ENCODE measurements at regions of chr2 and their contacts with region 1.

Region 1: DNA sequence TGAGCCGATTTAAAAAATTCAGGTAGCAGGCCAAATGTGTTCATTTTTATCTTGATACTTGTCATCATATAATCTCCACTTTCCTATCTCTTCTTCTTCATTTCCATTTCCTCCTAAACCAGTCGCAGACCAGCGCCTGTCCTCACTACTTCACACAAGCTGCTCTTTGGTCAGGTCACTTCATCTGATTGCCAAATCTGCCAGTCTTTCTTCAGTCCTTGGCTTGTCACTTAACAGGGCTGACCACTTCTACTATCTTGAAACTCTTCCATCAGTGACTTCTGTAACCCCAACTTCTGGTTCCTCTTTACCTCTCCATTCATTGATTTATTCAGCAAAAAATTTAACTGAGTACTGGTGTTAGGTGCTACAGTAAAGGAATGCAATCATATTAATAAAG is 18.0 kb upstream of the SPRED2 start:
- DNase-seq: no peak
- H3K4me3 ChIP-seq: no peak overlapping the region
- H3K27ac ChIP-seq: no peak overlapping the region
- H3K4me1 ChIP-seq: peaks cover 52% of the 10 kb centered on the region
- H3K27me3 ChIP-seq: no peaks in the 10 kb centered on the region
- CTCF ChIP-seq: no peak

Region 2: DNA sequence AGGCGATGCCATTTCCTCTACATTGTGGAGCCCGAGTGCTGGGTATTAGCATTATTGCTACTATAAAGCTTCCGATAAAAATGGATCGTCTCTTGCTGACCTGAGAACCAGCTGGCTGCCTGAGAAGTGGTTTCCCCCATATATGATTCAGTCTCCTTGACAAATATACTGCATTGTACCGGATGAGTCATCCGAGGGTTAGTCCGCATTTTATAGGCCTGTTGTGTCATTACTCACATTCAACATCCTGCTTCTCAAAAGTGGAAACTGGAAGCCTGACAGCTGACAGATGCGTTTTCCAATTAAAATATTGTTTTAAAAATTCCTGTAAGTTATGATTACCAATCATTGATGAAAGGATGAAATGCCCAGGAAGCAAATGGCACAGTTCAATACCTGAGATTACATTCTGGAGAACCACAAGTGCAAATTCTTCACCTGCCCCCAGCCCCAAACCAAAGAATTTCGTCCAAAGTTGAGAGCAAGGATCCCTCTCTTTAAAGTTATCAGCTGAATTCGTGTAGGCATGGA is 83.7 kb before region 1 on chr2:
- CTCF ChIA-PET with region 1: no interaction called
- POLR2A ChIA-PET with region 1: no interaction called
- intact Hi-C with region 1: loop called (anchors 1 kb)
- DNase-seq: peak; percentile 57 to 96
- H3K4me3 ChIP-seq: peak overlapping the region; percentile 48; the same call in 1 of the 2 replicates
- H3K27ac ChIP-seq: peak overlapping the region; percentile 76
- H3K4me1 ChIP-seq: peaks cover 49% of the 10 kb centered on the region
- H3K27me3 ChIP-seq: no peaks in the 10 kb centered on the region
- CTCF ChIP-seq: no peak

Region 3: DNA sequence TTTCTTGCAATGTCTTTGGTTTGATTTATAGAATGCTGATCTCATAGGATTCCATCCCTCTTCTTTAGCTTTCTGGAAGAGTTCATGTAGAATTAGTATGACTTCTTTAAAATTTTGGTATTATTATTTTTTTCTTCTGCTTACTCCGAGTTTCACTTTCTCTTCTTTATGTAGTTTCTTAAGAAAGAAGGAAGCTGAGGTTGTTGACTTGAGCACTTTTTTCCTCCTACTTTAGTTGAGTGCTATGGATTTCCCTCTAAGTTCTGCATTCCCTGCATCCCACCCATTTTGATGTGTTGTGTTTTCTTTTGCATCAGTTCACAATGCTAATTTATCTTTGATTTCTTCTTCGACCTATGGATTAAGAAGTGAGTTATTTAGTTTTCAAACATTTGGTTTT is 60.9 kb after region 1 on chr2:
- CTCF ChIA-PET with region 1: interaction called, 12 read pairs
- POLR2A ChIA-PET with region 1: no interaction called
- intact Hi-C with region 1: no loop called
- DNase-seq: no peak
- H3K4me3 ChIP-seq: no peak overlapping the region
- H3K27ac ChIP-seq: no peak overlapping the region
- H3K4me1 ChIP-seq: peaks cover 11% of the 10 kb centered on the region
- H3K27me3 ChIP-seq: no peaks in the 10 kb centered on the region
- CTCF ChIP-seq: no peak